ENCODE measurements at regions of chr11 and their contacts with region 1.

Region 1: DNA sequence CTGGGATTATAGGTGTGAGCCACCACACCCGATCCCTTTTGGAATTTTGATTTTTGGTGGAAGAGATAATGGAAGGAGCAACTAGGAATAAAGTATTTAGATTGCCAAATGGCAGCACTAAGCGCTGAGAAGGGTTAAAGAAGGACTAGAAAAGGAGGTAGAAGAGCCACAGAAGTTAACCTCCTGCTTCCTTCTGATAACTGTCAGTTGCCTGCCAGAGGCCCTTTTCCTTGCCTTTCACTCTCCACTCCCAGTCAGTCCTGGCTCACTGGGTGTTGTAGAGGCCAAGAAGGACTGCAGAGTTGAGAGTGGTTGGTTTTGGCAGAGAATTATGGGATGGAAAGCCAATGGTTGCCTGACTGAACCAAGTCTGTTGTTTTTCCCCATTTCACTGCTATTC is 19.3 kb downstream of the ZC3H12C start:
- DNase-seq: no peak
- H3K4me3 Mint-ChIP-seq: no peak overlapping the region
- H3K27ac Mint-ChIP-seq: no peak overlapping the region
- H3K4me1 Mint-ChIP-seq: no peaks in the 10 kb centered on the region
- H3K27me3 Mint-ChIP-seq: peaks cover 4% of the 10 kb centered on the region

Region 2: DNA sequence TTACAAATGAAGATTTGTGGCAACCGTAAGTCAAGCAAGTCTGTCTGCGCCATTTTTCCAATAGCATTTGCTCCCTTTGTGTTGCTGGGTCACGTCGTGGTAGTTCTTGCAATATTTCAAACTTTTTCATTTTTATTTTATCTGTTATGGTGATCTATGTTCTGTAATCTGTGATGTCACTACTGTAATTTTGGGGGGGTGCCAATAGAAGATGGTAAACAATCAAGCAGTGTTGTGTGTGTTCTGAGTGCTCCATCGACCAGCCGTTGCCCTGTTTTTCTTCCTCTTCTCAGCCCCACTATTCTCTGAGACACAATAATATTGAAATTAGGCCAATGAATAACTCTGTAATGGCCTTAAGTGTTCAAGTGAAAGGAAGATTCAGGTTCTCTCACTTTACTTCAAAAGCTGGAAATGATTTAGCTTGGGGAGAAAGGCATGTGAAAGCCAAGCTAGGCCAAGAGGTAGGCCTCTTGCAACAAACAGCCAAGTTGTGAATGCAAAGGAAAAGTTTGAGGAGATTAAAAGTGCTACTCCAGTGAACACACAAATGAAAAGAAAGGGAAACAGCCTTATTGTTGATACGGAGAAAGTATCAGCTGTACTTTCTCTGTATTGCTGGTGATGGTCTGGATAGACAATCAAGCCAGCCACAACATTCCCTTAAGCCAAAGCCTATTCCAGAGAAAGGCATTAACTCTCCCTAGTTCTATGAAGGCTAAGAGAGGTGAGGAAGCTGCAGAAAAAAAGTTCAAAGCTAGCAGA is 11.8 kb before region 1 on chr11:
- CTCF ChIA-PET with region 1: no interaction called
- POLR2A ChIA-PET with region 1: no interaction called
- intact Hi-C with region 1: loop called (anchors 1 kb)
- DNase-seq: no peak
- H3K4me3 Mint-ChIP-seq: no peak overlapping the region
- H3K27ac Mint-ChIP-seq: no peak overlapping the region
- H3K4me1 Mint-ChIP-seq: no peaks in the 10 kb centered on the region
- H3K27me3 Mint-ChIP-seq: peaks cover 15% of the 10 kb centered on the region